ENCODE measurements at regions of chr17 and their contacts with region 1.

Region 1: DNA sequence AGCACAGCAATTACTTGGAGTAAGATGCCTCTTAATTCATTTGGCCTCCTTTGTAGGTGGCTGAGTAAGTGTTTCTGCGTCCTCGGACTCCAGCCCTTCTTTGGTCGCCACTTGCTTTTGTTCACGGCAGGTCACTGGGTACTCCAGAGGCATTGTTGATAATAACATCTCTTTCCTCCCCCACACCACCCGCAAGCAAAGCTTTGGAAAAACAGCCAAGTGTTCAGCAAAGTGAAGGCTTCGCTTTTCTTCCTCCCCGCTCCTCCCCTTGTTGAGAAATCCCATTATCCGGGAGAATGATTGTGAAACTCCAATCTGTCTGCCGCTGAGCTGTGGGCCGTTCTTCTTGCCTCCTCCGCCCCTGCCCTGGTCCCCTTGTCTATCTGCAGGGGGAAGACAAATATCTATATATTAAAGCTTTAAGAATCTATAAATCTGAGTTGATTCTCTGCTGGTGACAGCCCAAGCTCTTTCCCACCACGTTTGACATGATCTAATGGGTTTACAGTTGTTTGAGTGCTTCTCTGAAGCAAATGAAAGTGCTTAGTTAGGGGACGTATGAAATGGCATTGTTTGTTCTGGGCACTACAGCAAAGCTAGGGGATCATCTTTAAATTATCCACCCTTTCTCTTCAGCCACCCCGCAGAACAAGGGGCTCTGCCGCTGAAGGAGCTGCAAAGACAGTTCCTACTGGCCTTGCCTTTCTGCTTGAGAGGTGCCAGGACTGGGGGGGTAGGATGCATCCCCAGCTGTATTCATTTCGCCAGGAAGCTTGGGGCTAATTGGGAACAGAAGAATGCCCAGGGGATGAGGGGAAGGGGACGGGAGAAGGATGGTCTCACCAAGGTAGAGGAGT is 167.1 kb downstream of the CCDC182 start:
- DNase-seq: peak; percentile 90
- H3K4me3 Mint-ChIP-seq: peak overlapping the region; percentile 67
- H3K27ac Mint-ChIP-seq: peak overlapping the region; percentile 83
- H3K4me1 Mint-ChIP-seq: peaks cover 26% of the 10 kb centered on the region
- H3K27me3 Mint-ChIP-seq: no peaks in the 10 kb centered on the region
- CTCF ChIP-seq: no peak

Region 2: DNA sequence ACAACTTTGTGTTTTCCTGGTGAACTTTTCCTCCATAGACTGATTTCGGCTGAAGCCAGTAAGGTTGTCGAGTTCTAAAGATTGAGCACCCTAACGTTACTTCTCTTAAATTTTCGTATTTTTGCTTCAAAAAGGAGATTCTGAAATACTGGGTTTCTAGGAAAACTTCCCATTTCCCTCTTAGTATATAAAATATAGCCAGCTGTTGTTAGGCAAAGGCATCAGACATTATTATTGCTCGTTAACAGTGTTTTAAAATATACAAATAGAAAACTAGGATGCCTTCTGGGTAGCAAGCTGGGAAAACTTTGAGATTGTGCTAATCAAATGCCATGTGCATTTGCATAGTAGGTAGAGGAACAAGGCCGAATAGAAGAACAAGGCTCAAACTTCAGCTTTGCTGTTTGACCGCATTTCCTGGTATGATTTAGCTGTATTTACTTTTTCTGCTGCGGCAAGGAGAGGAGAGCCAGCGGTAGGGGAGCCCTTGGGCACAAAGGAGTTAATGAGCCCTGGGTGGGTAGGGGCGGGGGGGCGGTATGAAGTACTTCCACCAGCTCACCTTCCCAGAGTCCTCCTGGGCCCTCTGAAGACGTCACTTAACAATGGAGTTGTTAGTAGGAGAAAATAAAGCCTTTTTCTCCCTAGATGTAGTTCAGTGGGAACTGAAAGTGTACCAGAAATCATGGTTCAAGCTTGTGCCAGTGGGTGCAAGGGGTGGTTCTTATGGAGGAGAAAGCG is 169.7 kb before region 1 on chr17:
- CTCF ChIA-PET with region 1: no interaction called
- POLR2A ChIA-PET with region 1: no interaction called
- intact Hi-C with region 1: no loop called
- DNase-seq: no peak
- H3K4me3 Mint-ChIP-seq: no peak overlapping the region
- H3K27ac Mint-ChIP-seq: no peak overlapping the region
- H3K4me1 Mint-ChIP-seq: peaks cover 7% of the 10 kb centered on the region
- H3K27me3 Mint-ChIP-seq: no peaks in the 10 kb centered on the region
- CTCF ChIP-seq: no peak

Region 3: DNA sequence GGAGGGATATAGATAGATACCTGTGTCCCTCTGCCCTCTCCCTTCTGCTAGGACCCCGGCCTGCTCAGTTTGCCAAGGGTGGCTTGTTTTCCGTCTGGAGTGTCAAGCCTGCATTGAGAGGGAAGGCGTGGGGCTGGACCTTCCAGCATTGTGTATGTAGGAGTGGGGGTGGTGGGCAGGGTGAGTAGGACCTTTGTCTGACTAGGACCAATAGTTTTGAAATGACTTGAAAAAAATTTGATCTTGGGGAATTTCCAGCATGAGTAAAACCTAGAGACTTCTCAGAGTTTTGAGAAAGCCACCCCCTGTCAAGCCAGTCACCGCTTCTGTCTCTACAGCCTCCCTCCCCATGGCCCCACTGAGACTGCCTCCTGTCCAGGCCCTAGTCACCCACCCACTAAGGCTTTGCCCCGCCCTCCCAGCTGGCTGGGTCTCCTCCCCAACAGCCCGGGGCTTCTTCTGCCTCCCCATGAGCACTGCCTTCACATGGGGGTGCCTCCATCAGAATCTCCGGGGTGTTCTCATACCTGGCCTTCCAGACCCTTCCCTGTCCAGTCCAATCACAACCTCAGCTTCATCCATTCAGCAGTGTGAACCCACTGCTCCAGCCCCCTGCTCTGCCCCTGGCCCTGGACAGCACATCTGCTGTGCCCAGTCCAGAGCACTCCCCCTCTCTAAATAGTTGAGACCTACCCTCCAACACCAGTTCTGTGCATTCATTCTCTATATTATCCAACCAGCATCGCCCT is 114.7 kb before region 1 on chr17:
- CTCF ChIA-PET with region 1: no interaction called
- POLR2A ChIA-PET with region 1: no interaction called
- intact Hi-C with region 1: no loop called
- DNase-seq: peak; percentile 45
- H3K4me3 Mint-ChIP-seq: no peak overlapping the region
- H3K27ac Mint-ChIP-seq: peak overlapping the region; percentile 29
- H3K4me1 Mint-ChIP-seq: peaks cover 25% of the 10 kb centered on the region
- H3K27me3 Mint-ChIP-seq: no peaks in the 10 kb centered on the region
- CTCF ChIP-seq: no peak

Region 4: DNA sequence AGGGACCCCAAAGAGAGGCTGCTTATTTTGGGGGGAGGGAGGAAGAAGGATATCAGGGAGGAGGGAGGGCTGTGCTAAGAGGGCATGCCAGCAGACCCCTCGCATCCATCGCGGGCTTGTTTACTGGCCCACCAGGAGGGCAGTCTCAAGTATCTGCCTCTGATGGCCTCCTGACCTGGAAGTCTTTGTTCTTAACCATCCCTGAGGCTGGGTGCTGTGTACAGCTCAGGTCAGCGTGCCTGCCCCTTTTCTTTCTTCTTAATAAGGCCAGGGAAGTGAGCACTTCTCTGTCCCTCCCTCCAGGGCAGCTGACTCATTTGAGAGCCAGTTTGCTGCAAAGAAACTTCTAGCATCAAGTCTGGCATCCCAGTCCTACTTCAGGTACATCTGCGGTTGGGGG is 10.1 kb after region 1 on chr17:
- CTCF ChIA-PET with region 1: interaction called, 4 read pairs
- POLR2A ChIA-PET with region 1: interaction called, 15 read pairs
- intact Hi-C with region 1: no loop called
- DNase-seq: peak; percentile 11
- H3K4me3 Mint-ChIP-seq: peak overlapping the region; percentile 33
- H3K27ac Mint-ChIP-seq: peak overlapping the region; percentile 96
- H3K4me1 Mint-ChIP-seq: peaks cover 21% of the 10 kb centered on the region
- H3K27me3 Mint-ChIP-seq: no peaks in the 10 kb centered on the region
- CTCF ChIP-seq: no peak